ENCODE measurements at regions of chr9 and their contacts with region 1.

Region 1: DNA sequence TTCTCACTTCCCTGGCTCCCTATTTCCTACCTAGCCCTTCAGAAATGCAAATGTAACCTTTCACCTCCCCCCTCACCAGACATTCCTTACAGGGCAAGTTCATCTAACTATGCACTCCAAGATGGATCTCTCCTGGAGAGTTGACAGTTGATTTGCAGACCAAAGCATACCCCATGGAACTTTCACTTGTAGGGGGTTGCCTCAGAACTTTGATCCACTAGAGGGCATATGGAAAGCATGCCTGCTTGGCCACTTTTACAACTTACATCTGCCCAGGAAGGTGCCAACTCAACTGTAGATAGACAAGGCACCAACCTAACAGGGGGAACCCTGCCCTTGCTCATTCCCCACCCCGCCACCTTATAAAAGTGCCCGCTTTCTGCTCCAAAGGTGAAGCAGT is 187.8 kb downstream of the NXNL2 start:
- DNase-seq: peak in 1 of 2 experiments; percentile 7
- H3K4me3 ChIP-seq: no peak overlapping the region
- H3K27ac ChIP-seq: no peak overlapping the region
- H3K4me1 ChIP-seq: no peaks in the 10 kb centered on the region
- H3K27me3 ChIP-seq: no peaks in the 10 kb centered on the region
- CTCF ChIP-seq: peak; percentile 59

Region 2: GRCh38 chr9:88551546-88552137 is 171.1 kb before region 1 on chr9:
- CTCF ChIA-PET with region 1: no interaction called
- POLR2A ChIA-PET with region 1: interaction called, 14 read pairs
- intact Hi-C with region 1: no loop called
- DNase-seq: no peak
- H3K4me3 ChIP-seq: no peak overlapping the region
- H3K27ac ChIP-seq: no peak overlapping the region
- H3K4me1 ChIP-seq: no peaks in the 10 kb centered on the region
- H3K27me3 ChIP-seq: no peaks in the 10 kb centered on the region
- CTCF ChIP-seq: no peak

Region 3: DNA sequence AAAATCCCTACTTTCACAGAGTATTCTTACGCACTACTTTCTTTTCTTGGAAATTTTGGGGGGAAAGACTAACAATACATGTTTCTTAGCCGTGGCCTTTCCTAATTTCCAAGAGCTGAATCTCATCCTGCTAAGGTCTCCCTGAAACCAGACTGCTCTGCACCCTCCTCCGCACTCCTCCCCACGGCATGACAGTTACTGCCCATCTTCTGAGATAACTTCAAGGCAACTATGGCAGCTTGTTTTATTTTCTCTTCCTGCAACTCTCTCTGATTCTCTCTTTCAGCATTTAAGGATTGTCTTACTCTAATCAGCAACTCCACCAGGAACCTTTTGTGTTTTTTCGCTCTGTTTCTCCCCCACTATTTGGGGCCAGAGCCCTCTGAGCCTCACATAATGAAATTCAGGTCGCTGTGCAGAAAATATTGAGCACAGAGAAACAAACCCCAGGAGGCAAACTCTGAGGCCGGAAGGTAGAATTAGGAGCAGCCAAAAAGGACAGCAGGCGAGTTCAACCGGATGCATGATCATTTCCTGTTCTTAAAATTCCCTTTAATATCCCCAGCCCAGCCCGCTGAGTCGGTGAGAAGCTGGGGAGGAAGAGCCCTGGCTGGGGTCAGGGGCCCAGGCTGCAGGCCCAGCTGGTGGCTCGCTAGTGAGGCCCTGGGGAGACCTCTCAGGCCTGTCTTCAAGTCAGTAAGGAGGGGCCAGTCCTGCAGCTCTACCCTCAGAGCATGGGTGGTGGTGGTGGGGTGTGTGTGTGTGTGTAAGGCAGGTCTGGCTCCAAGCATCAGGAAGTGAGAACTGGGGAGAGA is 55.0 kb after region 1 on chr9:
- CTCF ChIA-PET with region 1: no interaction called
- POLR2A ChIA-PET with region 1: no interaction called
- intact Hi-C with region 1: no loop called
- DNase-seq: no peak
- H3K4me3 ChIP-seq: no peak overlapping the region
- H3K27ac ChIP-seq: peak overlapping the region; percentile 98
- H3K4me1 ChIP-seq: peaks cover 53% of the 10 kb centered on the region
- H3K27me3 ChIP-seq: no peaks in the 10 kb centered on the region
- CTCF ChIP-seq: no peak

Region 4: DNA sequence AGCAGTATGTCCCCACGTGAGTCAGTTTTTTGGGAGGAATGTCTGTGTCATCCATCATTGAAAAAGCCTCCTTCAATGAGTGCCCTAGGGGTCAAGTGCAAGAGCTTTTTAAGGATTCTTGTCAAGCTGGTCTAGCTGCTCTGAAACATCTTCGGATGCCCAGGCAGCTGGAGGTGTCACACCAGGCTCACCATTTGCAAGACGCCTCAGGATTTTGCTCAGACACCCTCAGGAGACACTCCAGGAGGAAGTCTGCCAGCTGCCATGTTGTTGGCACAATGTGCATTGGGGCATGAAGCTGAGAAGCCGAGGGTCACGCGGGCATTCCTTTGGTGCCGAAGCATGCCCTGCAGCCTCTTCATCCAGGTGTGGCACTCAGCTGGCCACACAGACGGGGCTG is 157.5 kb after region 1 on chr9:
- CTCF ChIA-PET with region 1: no interaction called
- POLR2A ChIA-PET with region 1: no interaction called
- intact Hi-C with region 1: loop called (anchors 2 kb)
- DNase-seq: peak; percentile 77 to 85
- H3K4me3 ChIP-seq: no peak overlapping the region
- H3K27ac ChIP-seq: no peak overlapping the region
- H3K4me1 ChIP-seq: peaks cover 6% of the 10 kb centered on the region; the same call in 1 of the 2 replicates
- H3K27me3 ChIP-seq: no peaks in the 10 kb centered on the region
- CTCF ChIP-seq: no peak